ENCODE measurements at regions of chr3 and their contacts with region 1.

Region 1: GRCh38 chr3:130081351-130081881 is at the start of gene ALG1L2:
- DNase-seq: peak; percentile 82 to 95 (median 93)
- H3K4me3 ChIP-seq: peak within 1 kb of the TSS in 2 of 7 experiments; percentile 11 to 34
- H3K27ac ChIP-seq: no peak within 1 kb of the TSS
- H3K4me1 ChIP-seq: peaks cover 4 to 56% (median 32%) of the 10 kb centered on the region in 4 experiments
- H3K27me3 ChIP-seq: no peaks in the 10 kb centered on the region

Region 2: GRCh38 chr3:130093741-130094391 is 12.4 kb after region 1 on chr3:
- CTCF ChIA-PET with region 1: interaction called, 14 read pairs
- POLR2A ChIA-PET with region 1: interaction called, 3 read pairs
- DNase-seq: peak; percentile 59 to 83 (median 80)
- H3K4me3 ChIP-seq: peak overlapping the region in 6 of 7 experiments; percentile 38 to 68 (median 51)
- H3K27ac ChIP-seq: no peak overlapping the region
- H3K4me1 ChIP-seq: peaks cover 0 to 41% (median 26%) of the 10 kb centered on the region in 4 experiments
- H3K27me3 ChIP-seq: no peaks in the 10 kb centered on the region

Region 3: DNA sequence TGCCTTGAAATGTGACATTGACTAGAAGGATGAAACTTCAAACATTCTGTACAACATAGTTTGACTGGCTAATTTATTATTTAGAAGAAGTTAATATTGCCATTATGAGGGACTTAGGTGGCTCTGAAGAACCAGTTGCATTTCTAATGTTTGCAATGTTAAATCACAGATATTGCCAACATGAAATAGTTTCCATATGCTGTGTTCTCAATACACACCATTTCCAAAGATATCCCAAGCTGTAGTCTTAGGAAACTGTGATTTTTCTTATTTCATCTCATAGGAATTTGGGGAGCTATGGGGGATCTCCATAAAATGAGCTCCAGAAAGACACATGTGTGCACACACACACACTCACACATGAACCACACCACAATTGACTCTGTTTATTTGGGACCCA is 36.5 kb after region 1 on chr3:
- CTCF ChIA-PET with region 1: no interaction called
- POLR2A ChIA-PET with region 1: no interaction called
- DNase-seq: no peak
- H3K4me3 ChIP-seq: no peak overlapping the region
- H3K27ac ChIP-seq: no peak overlapping the region
- H3K4me1 ChIP-seq: peaks cover 0 to 6% (median 0%) of the 10 kb centered on the region in 4 experiments
- H3K27me3 ChIP-seq: no peaks in the 10 kb centered on the region

Region 4: GRCh38 chr3:130354430-130354829 is 273.0 kb after region 1 on chr3:
- CTCF ChIA-PET with region 1: no interaction called
- POLR2A ChIA-PET with region 1: no interaction called
- DNase-seq: peak; percentile 47 to 81 (median 75)
- H3K4me3 ChIP-seq: no peak overlapping the region
- H3K27ac ChIP-seq: no peak overlapping the region
- H3K4me1 ChIP-seq: peaks cover 0 to 5% (median 2%) of the 10 kb centered on the region in 4 experiments
- H3K27me3 ChIP-seq: peaks cover 0 to 5% (median 0%) of the 10 kb centered on the region in 5 experiments

Measured in common myeloid progenitor, CD34-positive (primary cell).